ENCODE measurements at regions of chr1 and their contacts with region 1.

Region 1: GRCh38 chr1:201481761-201482493 is 12.9 kb upstream of the PHLDA3 start:
- DNase-seq: peak; percentile 95
- H3K4me3 Mint-ChIP-seq: peak overlapping the region; percentile 80
- H3K27ac Mint-ChIP-seq: no peak overlapping the region
- H3K4me1 Mint-ChIP-seq: peaks cover 20% of the 10 kb centered on the region
- H3K27me3 Mint-ChIP-seq: peaks cover 15% of the 10 kb centered on the region

Region 2: GRCh38 chr1:201275041-201275676 is 206.8 kb before region 1 on chr1:
- intact Hi-C with region 1: no loop called
- DNase-seq: no peak
- H3K4me3 Mint-ChIP-seq: no peak overlapping the region
- H3K27ac Mint-ChIP-seq: no peak overlapping the region
- H3K4me1 Mint-ChIP-seq: no peaks in the 10 kb centered on the region
- H3K27me3 Mint-ChIP-seq: peaks cover 1% of the 10 kb centered on the region

Region 3: GRCh38 chr1:201436393-201436792 is 45.5 kb before region 1 on chr1:
- intact Hi-C with region 1: loop called (anchors 2 kb)
- DNase-seq: no peak
- H3K4me3 Mint-ChIP-seq: no peak overlapping the region
- H3K27ac Mint-ChIP-seq: no peak overlapping the region
- H3K4me1 Mint-ChIP-seq: peaks cover 5% of the 10 kb centered on the region
- H3K27me3 Mint-ChIP-seq: peaks cover 27% of the 10 kb centered on the region

Region 4: GRCh38 chr1:201447911-201448871 is 33.7 kb before region 1 on chr1:
- intact Hi-C with region 1: loop called (anchors 1 kb)
- DNase-seq: peak; percentile 85
- H3K4me3 Mint-ChIP-seq: no peak overlapping the region
- H3K27ac Mint-ChIP-seq: no peak overlapping the region
- H3K4me1 Mint-ChIP-seq: peaks cover 30% of the 10 kb centered on the region
- H3K27me3 Mint-ChIP-seq: peaks cover 22% of the 10 kb centered on the region

Region 5: DNA sequence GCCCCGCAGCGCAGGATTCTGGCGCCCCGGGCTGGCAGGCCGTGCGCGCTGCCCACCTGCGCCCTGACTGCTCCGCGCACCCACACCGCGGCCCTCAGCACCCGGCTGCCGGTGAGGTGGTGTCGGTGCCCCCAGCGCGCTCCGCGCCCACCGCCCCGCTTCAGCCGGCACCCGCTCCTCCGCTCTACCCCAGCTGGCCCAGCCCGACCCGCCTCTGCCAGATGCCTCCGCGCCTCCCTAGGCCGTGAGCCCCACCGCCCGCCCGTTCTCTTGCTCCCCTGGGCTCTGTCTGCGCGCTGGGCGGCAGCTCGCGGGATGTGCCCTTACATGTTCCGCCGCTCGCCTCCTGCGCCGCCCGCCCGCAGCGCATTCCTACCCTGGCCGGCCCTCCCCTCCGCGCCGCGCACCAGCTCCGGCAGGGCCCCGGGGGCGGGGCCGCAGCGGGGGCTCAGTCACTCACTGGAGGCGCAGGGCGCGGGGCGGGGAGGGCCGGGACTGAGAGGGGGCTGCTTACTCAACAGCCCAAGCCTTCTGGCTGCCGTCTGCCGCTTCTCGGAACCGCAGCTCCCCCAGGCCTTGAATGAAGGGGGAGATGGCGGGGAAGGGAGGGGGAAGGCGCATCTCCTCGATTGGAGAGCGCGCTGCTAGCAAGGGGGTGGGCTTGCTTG is 12.9 kb before region 1 on chr1 and contains the start of gene PHLDA3:
- intact Hi-C with region 1: loop called (anchors 1 kb)
- DNase-seq: peak; percentile 92
- H3K4me3 Mint-ChIP-seq: peak within 1 kb of the TSS; percentile 82
- H3K27ac Mint-ChIP-seq: peak within 1 kb of the TSS; percentile 56
- H3K4me1 Mint-ChIP-seq: peaks cover 13% of the 10 kb centered on the region
- H3K27me3 Mint-ChIP-seq: peaks cover 30% of the 10 kb centered on the region
- total RNA-seq, gene PHLDA3: 11.7 and 12.0 TPM in 2 replicates

Region 6: DNA sequence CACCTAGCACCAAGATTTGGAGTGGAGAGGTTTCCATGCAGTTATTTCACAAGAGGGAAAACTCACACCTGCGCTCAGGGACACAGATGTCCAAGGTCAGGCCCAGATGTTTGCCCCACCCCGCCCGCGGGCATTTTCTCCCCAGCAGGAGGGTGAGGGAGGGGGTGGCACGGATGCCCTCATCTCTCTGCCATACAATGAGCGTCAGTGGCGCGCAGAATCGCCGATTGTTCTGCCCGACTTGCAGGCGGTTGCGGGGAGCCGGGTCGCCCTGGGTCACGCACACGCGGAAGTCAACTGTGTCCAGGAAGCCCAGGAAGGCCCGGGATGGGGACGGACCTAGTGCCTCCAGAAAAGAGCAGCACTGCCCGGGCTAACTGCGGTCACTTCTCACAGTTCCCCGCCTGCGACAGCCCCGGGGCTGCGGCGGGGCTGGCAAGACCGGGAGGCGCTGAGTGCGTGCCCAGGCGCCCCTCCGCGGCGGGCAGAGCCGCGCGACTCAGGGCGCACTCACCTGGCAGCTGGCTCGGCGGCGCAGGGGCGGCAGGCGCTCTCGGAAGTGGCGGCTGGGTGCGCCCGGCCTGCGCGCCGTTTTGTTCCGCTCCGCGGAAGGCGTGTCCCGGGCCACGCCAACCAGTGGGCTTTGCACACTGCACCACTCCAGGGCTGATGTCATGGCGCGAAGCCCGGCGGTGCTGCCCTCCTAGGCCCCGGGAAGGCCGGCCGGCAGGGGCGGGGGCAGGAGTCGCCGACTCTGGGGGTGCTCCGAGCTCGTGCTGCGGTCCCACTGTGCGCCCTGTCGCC is 24.8 kb after region 1 on chr1 and contains the start of gene CSRP1:
- intact Hi-C with region 1: loop called (anchors 1 kb)
- DNase-seq: peak; percentile 95
- H3K4me3 Mint-ChIP-seq: peak within 1 kb of the TSS; percentile 94
- H3K27ac Mint-ChIP-seq: peak within 1 kb of the TSS; percentile 91
- H3K4me1 Mint-ChIP-seq: peaks cover 39% of the 10 kb centered on the region
- H3K27me3 Mint-ChIP-seq: no peaks in the 10 kb centered on the region
- total RNA-seq, gene CSRP1: 59.0 and 60.6 TPM in 2 replicates

Region 7: GRCh38 chr1:201513498-201514243 is 31.7 kb after region 1 on chr1:
- intact Hi-C with region 1: loop called (anchors 1 kb)
- DNase-seq: no peak
- H3K4me3 Mint-ChIP-seq: no peak overlapping the region
- H3K27ac Mint-ChIP-seq: no peak overlapping the region
- H3K4me1 Mint-ChIP-seq: peaks cover 17% of the 10 kb centered on the region
- H3K27me3 Mint-ChIP-seq: no peaks in the 10 kb centered on the region